ENCODE measurements at regions of chr19 and their contacts with region 1.

Region 1: GRCh38 chr19:57435062-57435978 is at the start of gene ZNF749:
- DNase-seq: peak; percentile 95 to 99 (median 97)
- H3K4me3 ChIP-seq: peak within 1 kb of the TSS; percentile 62 to 70
- H3K4me3 Mint-ChIP-seq: peak within 1 kb of the TSS; percentile 96 to 100 (median 98)
- H3K27ac ChIP-seq: peak within 1 kb of the TSS; percentile 66
- H3K27ac Mint-ChIP-seq: peak within 1 kb of the TSS; percentile 83 to 99 (median 97)
- H3K4me1 ChIP-seq: peaks cover 13% of the 10 kb centered on the region
- H3K4me1 Mint-ChIP-seq: peaks cover 22 to 36% (median 28%) of the 10 kb centered on the region in 4 donors
- H3K27me3 ChIP-seq: no peaks in the 10 kb centered on the region
- H3K27me3 Mint-ChIP-seq: peaks cover 0 to 2% of the 10 kb centered on the region in 2 donors
- total RNA-seq, gene ZNF749: 14.8 to 15.2 TPM

Region 2: DNA sequence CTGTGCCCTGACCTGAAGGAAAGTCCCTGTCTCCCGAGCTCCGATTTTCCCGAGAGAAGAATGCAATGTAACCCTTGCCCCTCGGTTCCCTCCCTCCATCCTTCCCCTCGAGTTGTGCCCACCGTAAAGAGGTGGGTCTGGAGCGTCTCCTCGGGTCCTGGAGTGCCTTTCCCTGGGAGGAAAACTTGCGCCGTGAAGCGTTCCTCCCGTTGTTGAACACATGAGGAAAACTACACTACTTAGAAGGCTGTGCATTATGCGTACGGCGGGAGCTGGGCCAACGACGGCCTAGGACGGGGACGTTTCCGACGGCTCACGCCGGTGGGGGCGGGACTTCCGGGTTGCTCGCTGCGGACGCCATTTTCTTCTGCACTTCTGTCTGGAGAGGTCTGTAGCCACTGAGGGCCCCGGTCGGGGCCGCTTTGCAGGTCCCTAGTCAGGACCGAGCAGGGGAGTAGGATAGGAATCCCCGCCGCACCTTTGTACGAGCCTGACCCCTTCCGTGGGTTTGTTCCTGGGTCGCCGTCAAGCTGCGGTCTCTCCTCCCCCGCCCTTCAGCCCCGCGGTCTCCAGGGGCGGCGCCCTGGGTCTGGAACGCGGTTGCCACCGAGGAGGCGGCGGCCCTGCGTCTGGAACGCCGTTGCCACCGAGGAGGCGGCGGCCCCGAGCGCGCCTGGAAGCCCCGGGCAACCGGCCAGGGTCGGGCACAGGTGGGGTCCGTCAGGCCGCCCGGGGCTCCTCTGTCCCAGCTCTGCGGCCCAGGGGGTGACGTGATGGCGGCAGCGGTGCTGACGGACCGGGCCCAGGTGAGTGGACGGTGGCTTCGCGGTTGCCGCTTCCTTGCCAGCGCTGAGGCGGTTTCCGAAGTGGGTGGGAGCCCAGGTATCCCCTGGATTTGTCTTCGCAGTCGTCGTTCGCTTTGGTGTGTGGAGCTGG is 243.9 kb before region 1 on chr19 and contains the start of gene ZNF264:
- CTCF ChIA-PET with region 1: no interaction called
- POLR2A ChIA-PET with region 1: no interaction called
- intact Hi-C with region 1: no loop called
- DNase-seq: peak; percentile 88 to 90 (median 88)
- H3K4me3 ChIP-seq: peak within 1 kb of the TSS; percentile 57 to 73
- H3K4me3 Mint-ChIP-seq: peak within 1 kb of the TSS; percentile 91 to 94 (median 93)
- H3K27ac ChIP-seq: peak within 1 kb of the TSS; percentile 77
- H3K27ac Mint-ChIP-seq: peak within 1 kb of the TSS; percentile 94 to 98 (median 96)
- H3K4me1 ChIP-seq: peaks cover 23% of the 10 kb centered on the region
- H3K4me1 Mint-ChIP-seq: peaks cover 19 to 54% (median 36%) of the 10 kb centered on the region in 4 donors
- H3K27me3 ChIP-seq: no peaks in the 10 kb centered on the region
- H3K27me3 Mint-ChIP-seq: peaks cover 6 to 7% of the 10 kb centered on the region in 2 donors
- total RNA-seq, gene ZNF264: 62.5 to 64.1 TPM

Region 3: DNA sequence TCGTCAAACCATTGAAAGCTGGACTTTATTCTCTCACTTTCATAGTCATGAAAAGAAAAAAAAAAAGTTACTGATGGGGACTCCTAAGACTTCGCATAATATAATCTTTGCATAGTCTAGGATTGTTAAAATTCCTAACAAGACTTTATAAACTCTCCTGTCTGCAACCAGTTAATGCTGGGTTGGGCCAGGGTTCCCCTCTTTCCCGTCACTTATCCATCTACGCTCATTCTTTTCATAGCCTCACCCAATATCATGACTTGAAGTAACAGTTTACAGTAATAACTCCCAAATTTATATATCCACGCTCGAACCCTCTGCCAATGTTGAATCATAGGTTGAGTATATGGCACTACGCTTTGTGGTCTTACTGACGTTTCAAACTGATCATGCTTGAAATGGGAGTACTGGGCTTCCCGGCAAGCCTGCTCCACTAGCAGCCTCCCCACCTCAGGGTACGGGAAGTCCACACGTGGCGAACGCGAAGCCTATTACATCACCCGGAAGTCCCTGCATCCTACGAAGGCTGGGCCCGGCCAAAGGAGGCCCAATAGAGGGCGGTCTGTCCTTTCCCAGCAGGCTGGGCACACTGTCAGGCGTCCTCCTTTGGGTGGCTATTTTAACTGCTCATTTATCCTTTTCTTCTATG is 155.8 kb before region 1 on chr19:
- CTCF ChIA-PET with region 1: no interaction called
- POLR2A ChIA-PET with region 1: no interaction called
- intact Hi-C with region 1: loop called (anchors 1 kb)
- DNase-seq: peak in 4 of 5 donors; percentile 77 to 85 (median 84)
- H3K4me3 ChIP-seq: peak overlapping the region; percentile 68 to 74
- H3K4me3 Mint-ChIP-seq: peak overlapping the region in 1 of 8 donors; percentile 20
- H3K27ac ChIP-seq: peak overlapping the region; percentile 100
- H3K27ac Mint-ChIP-seq: peak overlapping the region in 1 of 7 donors; percentile 74
- H3K4me1 ChIP-seq: peaks cover 38% of the 10 kb centered on the region
- H3K4me1 Mint-ChIP-seq: peaks cover 0 to 33% (median 23%) of the 10 kb centered on the region in 4 donors
- H3K27me3 ChIP-seq: no peaks in the 10 kb centered on the region
- H3K27me3 Mint-ChIP-seq: no peaks in the 10 kb centered on the region

Region 4: GRCh38 chr19:57389730-57390598 is 45.4 kb before region 1 on chr19 and contains the start of gene ZNF548:
- CTCF ChIA-PET with region 1: no interaction called
- POLR2A ChIA-PET with region 1: interaction called, 5 read pairs
- intact Hi-C with region 1: loop called (anchors 1 kb)
- DNase-seq: peak; percentile 93 to 100 (median 95)
- H3K4me3 ChIP-seq: peak within 1 kb of the TSS; percentile 52 to 62
- H3K4me3 Mint-ChIP-seq: peak within 1 kb of the TSS; percentile 97 to 99 (median 98)
- H3K27ac ChIP-seq: peak within 1 kb of the TSS; percentile 95
- H3K27ac Mint-ChIP-seq: peak within 1 kb of the TSS; percentile 98 to 100 (median 99)
- H3K4me1 ChIP-seq: peaks cover 22% of the 10 kb centered on the region
- H3K4me1 Mint-ChIP-seq: peaks cover 22 to 41% (median 31%) of the 10 kb centered on the region in 4 donors
- H3K27me3 ChIP-seq: no peaks in the 10 kb centered on the region
- H3K27me3 Mint-ChIP-seq: peaks cover 0 to 3% of the 10 kb centered on the region in 2 donors
- total RNA-seq, gene ZNF548: 85.4 to 103 TPM

Region 5: GRCh38 chr19:57477191-57478008 is 42.1 kb after region 1 on chr19 and contains the start of gene ZNF772:
- CTCF ChIA-PET with region 1: no interaction called
- POLR2A ChIA-PET with region 1: no interaction called
- intact Hi-C with region 1: loop called (anchors 1 kb)
- DNase-seq: peak; percentile 86 to 96 (median 89)
- H3K4me3 ChIP-seq: peak within 1 kb of the TSS; percentile 36 to 89
- H3K4me3 Mint-ChIP-seq: peak within 1 kb of the TSS; percentile 86 to 98 (median 92)
- H3K27ac ChIP-seq: peak within 1 kb of the TSS; percentile 61
- H3K27ac Mint-ChIP-seq: peak within 1 kb of the TSS; percentile 26 to 95 (median 90)
- H3K4me1 ChIP-seq: peaks cover 8% of the 10 kb centered on the region
- H3K4me1 Mint-ChIP-seq: peaks cover 4 to 19% (median 14%) of the 10 kb centered on the region in 4 donors
- H3K27me3 ChIP-seq: no peaks in the 10 kb centered on the region
- H3K27me3 Mint-ChIP-seq: peaks cover 0 to 2% of the 10 kb centered on the region in 2 donors
- total RNA-seq, gene ZNF772: 12.8 to 17.4 TPM

Region 6: DNA sequence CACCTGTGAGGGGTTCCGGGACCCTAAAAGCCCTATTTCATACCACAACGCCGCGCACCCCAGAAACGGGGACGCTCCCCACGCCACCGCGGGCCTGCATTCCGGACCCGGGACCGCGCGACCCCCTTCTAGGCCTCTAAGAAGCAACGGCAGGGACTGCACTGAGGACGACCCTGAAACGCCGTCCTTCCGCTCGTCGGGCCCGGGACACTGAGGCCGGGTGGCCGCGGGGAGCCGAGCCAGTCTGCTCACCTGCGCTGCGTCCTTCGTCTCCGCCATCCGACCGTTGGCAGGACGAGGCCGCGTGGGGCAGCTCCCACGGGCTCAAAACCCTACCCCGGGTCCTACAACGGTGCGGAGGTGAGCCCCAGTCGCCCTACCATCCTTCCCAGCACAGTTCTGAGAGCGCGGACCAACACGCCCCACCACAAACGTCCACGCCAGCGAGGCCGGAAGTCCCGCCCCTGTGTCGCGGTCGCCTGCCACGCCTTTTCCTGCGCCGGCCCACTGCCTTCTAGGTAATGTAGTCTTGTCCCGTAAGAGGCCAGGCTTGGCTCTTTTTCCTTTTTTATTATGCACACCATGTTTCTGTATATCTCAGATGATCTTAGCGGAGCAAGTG is 124.2 kb after region 1 on chr19 and contains the start of gene ZNF550:
- CTCF ChIA-PET with region 1: no interaction called
- POLR2A ChIA-PET with region 1: interaction called, 3 read pairs
- intact Hi-C with region 1: loop called (anchors 1 kb)
- DNase-seq: peak; percentile 83 to 86 (median 84)
- H3K4me3 ChIP-seq: peak within 1 kb of the TSS; percentile 44 to 84
- H3K4me3 Mint-ChIP-seq: peak within 1 kb of the TSS; percentile 91 to 99 (median 98)
- H3K27ac ChIP-seq: peak within 1 kb of the TSS; percentile 63
- H3K27ac Mint-ChIP-seq: peak within 1 kb of the TSS; percentile 70 to 97 (median 95)
- H3K4me1 ChIP-seq: peaks cover 22% of the 10 kb centered on the region
- H3K4me1 Mint-ChIP-seq: peaks cover 20 to 47% (median 29%) of the 10 kb centered on the region in 4 donors
- H3K27me3 ChIP-seq: no peaks in the 10 kb centered on the region
- H3K27me3 Mint-ChIP-seq: peaks cover 0 to 1% of the 10 kb centered on the region in 2 donors
- total RNA-seq, gene ZNF550: 37.0 to 37.8 TPM

Region 7: GRCh38 chr19:57632987-57633831 is 197.9 kb after region 1 on chr19 and contains the start of gene ZNF211:
- CTCF ChIA-PET with region 1: no interaction called
- POLR2A ChIA-PET with region 1: no interaction called
- intact Hi-C with region 1: loop called (anchors 1 kb)
- DNase-seq: peak; percentile 86 to 91 (median 88)
- H3K4me3 ChIP-seq: peak within 1 kb of the TSS; percentile 84 to 87
- H3K4me3 Mint-ChIP-seq: peak within 1 kb of the TSS; percentile 94 to 98 (median 96)
- H3K27ac ChIP-seq: peak within 1 kb of the TSS; percentile 81
- H3K27ac Mint-ChIP-seq: peak within 1 kb of the TSS; percentile 83 to 96 (median 94)
- H3K4me1 ChIP-seq: peaks cover 19% of the 10 kb centered on the region
- H3K4me1 Mint-ChIP-seq: peaks cover 18 to 35% (median 27%) of the 10 kb centered on the region in 4 donors
- H3K27me3 ChIP-seq: no peaks in the 10 kb centered on the region
- H3K27me3 Mint-ChIP-seq: no peaks in the 10 kb centered on the region
- total RNA-seq, gene ZNF211: 48.7 to 53.3 TPM

Region 8: GRCh38 chr19:58154679-58155648 is 719.6 kb after region 1 on chr19:
- CTCF ChIA-PET with region 1: no interaction called
- POLR2A ChIA-PET with region 1: no interaction called
- intact Hi-C with region 1: loop called (anchors 1 kb)
- DNase-seq: peak; percentile 92 to 99 (median 96)
- H3K4me3 ChIP-seq: peak overlapping the region; percentile 88
- H3K4me3 Mint-ChIP-seq: peak overlapping the region; percentile 71 to 89 (median 84)
- H3K27ac ChIP-seq: peak overlapping the region; percentile 80
- H3K27ac Mint-ChIP-seq: peak overlapping the region; percentile 41 to 85 (median 69)
- H3K4me1 ChIP-seq: peaks cover 16% of the 10 kb centered on the region
- H3K4me1 Mint-ChIP-seq: peaks cover 5 to 24% (median 10%) of the 10 kb centered on the region in 4 donors
- H3K27me3 ChIP-seq: no peaks in the 10 kb centered on the region
- H3K27me3 Mint-ChIP-seq: no peaks in the 10 kb centered on the region